Calu3 (cell line): ENCODE measurements at regions of chr3 and their contacts with region 1.

Region 1: DNA sequence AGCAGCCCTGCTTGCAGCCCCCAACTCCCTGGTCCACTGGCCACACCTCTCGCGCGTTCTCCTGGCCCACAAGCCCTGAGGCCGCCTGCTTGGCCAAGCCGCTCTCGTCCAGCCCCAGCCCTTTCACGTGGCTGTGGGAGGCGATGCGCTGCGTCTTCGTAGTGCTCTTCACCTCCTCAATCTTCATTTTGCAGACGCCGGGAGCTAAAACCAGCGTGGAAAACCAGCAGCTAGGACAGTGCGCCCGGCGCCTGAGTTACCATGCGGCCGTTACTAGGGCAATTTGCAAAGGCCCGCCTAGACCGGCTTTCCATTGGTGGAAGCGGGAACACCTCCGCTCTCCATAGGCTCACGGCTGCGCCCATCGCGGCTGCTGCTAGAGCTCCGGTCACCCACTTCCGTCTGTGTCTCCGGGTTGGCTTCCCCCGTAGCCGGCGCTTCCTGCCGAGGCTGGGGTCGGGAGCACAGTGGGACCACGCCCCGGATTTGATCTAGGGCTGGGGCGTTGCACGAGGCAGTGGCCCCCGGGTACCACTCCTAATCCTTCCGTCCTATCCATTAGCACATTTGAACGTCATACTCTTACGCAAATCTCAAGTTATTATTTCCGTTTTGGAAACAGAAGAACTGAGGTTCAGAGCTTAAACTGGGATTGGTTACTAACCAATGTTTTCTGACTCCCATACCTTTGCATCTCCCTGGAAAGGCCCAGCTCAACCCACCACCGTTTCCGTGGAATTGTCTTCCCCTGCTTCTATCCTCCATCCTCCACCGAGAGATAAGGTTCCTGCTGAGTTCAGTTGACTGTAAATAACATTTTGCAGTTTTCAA is at the start of gene RUVBL1:
- DNase-seq: peak; percentile 100
- H3K4me3 Mint-ChIP-seq: peak within 1 kb of the TSS; percentile 100
- H3K27ac Mint-ChIP-seq: peak within 1 kb of the TSS; percentile 96
- H3K4me1 Mint-ChIP-seq: peaks cover 29% of the 10 kb centered on the region
- H3K27me3 Mint-ChIP-seq: peaks cover 6% of the 10 kb centered on the region
- CTCF ChIP-seq: no peak
- total RNA-seq, gene RUVBL1: 156 and 167 TPM in 2 replicates

Region 2: DNA sequence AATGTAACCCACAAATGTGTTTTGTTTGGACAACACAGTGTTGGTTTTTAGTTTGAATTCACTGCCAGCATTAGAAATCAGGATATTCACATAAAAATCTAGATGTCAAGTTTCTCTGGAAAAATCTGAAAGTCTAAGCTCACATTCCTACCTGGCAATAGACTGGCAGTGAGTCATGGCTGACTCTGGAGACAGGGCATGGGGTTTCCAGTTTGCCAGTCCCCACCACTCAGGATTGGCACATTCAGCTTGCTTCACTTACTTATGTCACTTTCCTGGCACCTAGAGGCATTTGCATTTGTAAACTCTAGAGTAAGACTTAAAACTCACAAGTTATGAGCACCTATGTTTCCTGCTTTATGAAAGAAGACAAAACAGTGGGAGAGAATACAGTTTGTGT is 90.7 kb before region 1 on chr3:
- CTCF ChIA-PET with region 1: no interaction called
- intact Hi-C with region 1: no loop called
- DNase-seq: no peak
- H3K4me3 Mint-ChIP-seq: no peak overlapping the region
- H3K27ac Mint-ChIP-seq: no peak overlapping the region
- H3K4me1 Mint-ChIP-seq: peaks cover 6% of the 10 kb centered on the region
- H3K27me3 Mint-ChIP-seq: peaks cover 43% of the 10 kb centered on the region
- CTCF ChIP-seq: no peak

Region 3: GRCh38 chr3:128095222-128095703 is 28.5 kb before region 1 on chr3:
- CTCF ChIA-PET with region 1: interaction called, 13 read pairs
- intact Hi-C with region 1: no loop called
- DNase-seq: peak; percentile 93
- H3K4me3 Mint-ChIP-seq: no peak overlapping the region
- H3K27ac Mint-ChIP-seq: no peak overlapping the region
- H3K4me1 Mint-ChIP-seq: peaks cover 23% of the 10 kb centered on the region
- H3K27me3 Mint-ChIP-seq: no peaks in the 10 kb centered on the region
- CTCF ChIP-seq: peak; percentile 91

Region 4: DNA sequence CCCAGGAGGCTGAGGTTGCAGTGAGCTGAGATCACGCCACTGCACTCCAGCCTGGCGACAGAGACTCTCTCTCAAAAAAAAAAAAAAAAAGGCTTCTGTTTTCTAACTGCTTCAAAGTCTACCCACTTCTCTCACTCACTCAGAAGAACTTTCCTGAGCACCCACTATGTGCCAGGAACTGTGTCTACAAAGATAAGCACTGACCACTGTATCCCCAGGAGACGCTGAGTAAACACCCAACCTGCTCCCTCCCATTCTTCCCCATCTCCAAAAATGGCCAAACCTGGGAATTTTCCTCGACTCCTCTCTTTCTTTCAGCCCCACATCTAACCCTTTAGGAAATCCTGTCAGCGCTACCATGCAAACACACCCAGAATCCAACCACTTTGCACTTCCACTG is 12.6 kb before region 1 on chr3:
- CTCF ChIA-PET with region 1: interaction called, 10 read pairs
- intact Hi-C with region 1: no loop called
- DNase-seq: no peak
- H3K4me3 Mint-ChIP-seq: no peak overlapping the region
- H3K27ac Mint-ChIP-seq: no peak overlapping the region
- H3K4me1 Mint-ChIP-seq: peaks cover 28% of the 10 kb centered on the region
- H3K27me3 Mint-ChIP-seq: no peaks in the 10 kb centered on the region
- CTCF ChIP-seq: no peak

Region 5: GRCh38 chr3:128153156-128154041 is 29.6 kb after region 1 on chr3 and contains the start of gene EEFSEC:
- CTCF ChIA-PET with region 1: interaction called, 3 read pairs
- intact Hi-C with region 1: loop called (anchors 2 kb)
- DNase-seq: peak; percentile 97
- H3K4me3 Mint-ChIP-seq: peak within 1 kb of the TSS; percentile 88
- H3K27ac Mint-ChIP-seq: peak within 1 kb of the TSS; percentile 85
- H3K4me1 Mint-ChIP-seq: peaks cover 24% of the 10 kb centered on the region
- H3K27me3 Mint-ChIP-seq: no peaks in the 10 kb centered on the region
- CTCF ChIP-seq: no peak
- total RNA-seq, gene EEFSEC: 37.7 and 38.9 TPM in 2 replicates

Region 6: DNA sequence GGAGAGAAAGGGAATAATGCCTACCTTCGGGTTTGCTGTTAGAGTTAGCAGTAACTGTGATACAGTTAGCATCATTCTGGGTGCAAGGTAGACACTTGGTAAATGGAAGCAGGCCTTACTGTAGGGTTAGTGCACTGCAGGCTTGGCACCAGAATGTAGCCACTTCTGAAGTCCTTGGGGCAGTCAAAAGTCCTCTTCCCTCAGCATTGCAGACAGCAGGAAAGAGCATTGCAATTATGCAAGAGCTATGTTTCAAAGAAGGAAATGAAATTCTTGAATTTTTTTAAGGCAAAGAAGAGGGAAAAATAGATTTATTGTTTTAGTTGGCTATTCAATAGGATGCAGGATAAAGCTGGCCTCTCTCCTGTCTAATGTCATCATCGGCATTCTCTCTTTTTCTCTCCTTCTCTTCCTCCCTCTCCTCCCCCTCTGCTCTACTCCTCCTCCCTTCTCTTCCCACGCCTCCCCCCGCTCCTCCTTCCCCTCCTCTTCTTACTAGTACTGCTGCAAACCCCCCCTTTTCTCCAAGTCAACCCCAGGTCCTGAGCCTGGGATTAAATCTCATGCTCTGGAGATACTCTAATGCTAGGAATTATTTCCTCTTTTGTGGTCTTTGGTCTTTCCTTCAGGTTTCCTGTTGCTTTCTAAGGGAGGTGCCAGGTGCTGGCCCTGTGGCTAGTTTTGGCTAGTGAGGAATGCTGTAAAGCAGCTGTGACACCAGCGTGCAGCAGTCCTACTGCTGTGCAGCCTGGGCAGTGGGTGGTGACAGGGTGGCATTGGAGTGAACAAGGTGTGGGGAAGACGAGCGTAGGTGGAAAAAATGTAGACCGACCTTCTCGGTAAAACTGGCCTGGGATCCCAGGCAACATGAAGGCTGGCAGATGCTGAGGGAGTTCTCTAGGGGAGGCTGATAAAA is 51.2 kb after region 1 on chr3:
- CTCF ChIA-PET with region 1: no interaction called
- intact Hi-C with region 1: no loop called
- DNase-seq: no peak
- H3K4me3 Mint-ChIP-seq: no peak overlapping the region
- H3K27ac Mint-ChIP-seq: no peak overlapping the region
- H3K4me1 Mint-ChIP-seq: no peaks in the 10 kb centered on the region
- H3K27me3 Mint-ChIP-seq: no peaks in the 10 kb centered on the region
- CTCF ChIP-seq: no peak